Mammary epithelial cell (primary cell): ENCODE measurements at regions of chr22 and their contacts with region 1.

Region 1: DNA sequence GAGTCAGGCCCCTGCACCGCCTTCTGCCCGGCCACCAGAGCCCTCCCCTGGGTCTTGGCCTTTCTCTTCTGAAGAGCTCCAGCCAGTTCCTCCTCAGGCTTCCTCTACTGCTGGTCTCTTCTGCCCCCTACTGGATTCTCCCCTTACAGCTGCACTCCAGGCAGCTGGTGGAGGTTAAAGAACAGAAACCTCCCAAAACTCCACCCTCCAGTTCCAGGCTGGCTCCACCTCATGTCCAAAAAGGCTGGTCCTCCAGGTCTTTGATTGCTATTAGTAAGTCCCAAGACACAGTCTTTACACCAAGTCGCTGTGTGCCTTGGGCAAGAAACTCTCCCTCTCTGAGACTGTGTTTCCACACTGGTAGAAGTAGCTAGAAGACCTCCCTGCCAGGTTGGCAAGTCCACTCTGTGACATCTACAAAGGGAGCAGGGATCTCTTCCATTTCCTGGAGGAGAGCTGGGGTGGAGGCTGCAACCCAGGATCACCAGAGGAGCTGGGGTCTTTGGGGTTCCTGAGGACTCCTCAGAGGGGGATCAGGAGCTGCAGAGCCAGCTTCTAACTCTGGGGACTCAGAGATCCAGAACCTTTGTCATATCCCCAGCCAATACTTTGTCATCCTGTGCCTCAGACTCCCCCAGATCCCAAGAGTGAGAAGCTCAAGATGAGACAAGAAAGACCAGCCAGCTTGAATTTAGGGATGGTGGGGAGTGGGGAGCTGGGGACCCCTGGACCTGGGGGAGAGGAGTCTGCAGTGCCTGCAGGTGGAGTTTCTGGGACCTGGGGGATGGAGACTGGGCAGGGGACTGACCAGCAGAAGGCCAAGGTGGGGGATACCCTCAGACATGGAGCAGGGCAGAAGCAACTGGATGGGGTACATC is 3.4 kb upstream of the IGLL5 start:
- DNase-seq: peak; percentile 37
- H3K4me3 ChIP-seq: no peak overlapping the region
- H3K27ac ChIP-seq: no peak overlapping the region
- H3K4me1 ChIP-seq: no peaks in the 10 kb centered on the region
- H3K27me3 ChIP-seq: no peaks in the 10 kb centered on the region
- CTCF ChIP-seq: peak; percentile 45 to 74

Region 2: GRCh38 chr22:22463855-22464540 is 420.3 kb before region 1 on chr22:
- CTCF ChIA-PET with region 1: no interaction called
- dilution Hi-C with region 1: no loop called
- in situ Hi-C with region 1: no loop called
- intact Hi-C with region 1: loop called (anchors 10 kb)
- DNase-seq: peak; percentile 25
- H3K4me3 ChIP-seq: no peak overlapping the region
- H3K27ac ChIP-seq: no peak overlapping the region
- H3K4me1 ChIP-seq: no peaks in the 10 kb centered on the region
- H3K27me3 ChIP-seq: no peaks in the 10 kb centered on the region
- CTCF ChIP-seq: peak; percentile 45 to 62

Region 3: GRCh38 chr22:22593964-22594656 is 290.1 kb before region 1 on chr22:
- CTCF ChIA-PET with region 1: no interaction called
- dilution Hi-C with region 1: no loop called
- in situ Hi-C with region 1: loop called in 1 of 2 experiments (anchors 25 kb)
- intact Hi-C with region 1: no loop called
- DNase-seq: peak; percentile 8
- H3K4me3 ChIP-seq: no peak overlapping the region
- H3K27ac ChIP-seq: no peak overlapping the region
- H3K4me1 ChIP-seq: no peaks in the 10 kb centered on the region
- H3K27me3 ChIP-seq: no peaks in the 10 kb centered on the region
- CTCF ChIP-seq: peak; percentile 54 to 61

Region 4: GRCh38 chr22:22770280-22770871 is 113.9 kb before region 1 on chr22:
- CTCF ChIA-PET with region 1: interaction called, 5 read pairs
- dilution Hi-C with region 1: no loop called
- in situ Hi-C with region 1: no loop called
- intact Hi-C with region 1: loop called (anchors 5 kb)
- DNase-seq: peak; percentile 10
- H3K4me3 ChIP-seq: no peak overlapping the region
- H3K27ac ChIP-seq: no peak overlapping the region
- H3K4me1 ChIP-seq: no peaks in the 10 kb centered on the region
- H3K27me3 ChIP-seq: no peaks in the 10 kb centered on the region
- CTCF ChIP-seq: peak; percentile 68 to 85

Region 5: DNA sequence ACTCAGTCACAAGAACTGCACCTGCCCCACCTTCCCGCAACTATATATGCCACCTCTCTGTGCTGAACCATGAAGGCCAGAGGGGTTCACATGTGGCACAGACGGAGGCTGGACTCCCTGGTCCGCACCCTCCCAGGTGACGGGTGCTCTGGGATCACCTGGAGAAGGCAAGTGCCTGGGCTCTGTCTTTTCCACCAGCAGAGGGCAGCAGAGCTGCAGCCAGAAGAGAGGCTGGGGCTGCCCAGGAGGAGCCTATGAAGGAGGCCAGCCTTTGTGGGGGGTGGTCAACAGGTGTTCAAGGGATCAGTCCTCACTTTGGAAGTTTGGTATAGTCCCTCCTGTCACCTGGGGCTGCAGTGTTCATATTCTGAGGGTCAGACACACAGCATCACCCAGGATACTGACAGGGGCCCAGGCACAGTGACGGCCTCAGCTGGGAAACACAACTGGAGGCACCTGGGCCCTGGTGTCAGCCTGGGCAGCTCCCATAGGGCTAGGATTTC is 35.8 kb before region 1 on chr22:
- CTCF ChIA-PET with region 1: no interaction called
- dilution Hi-C with region 1: no loop called
- in situ Hi-C with region 1: no loop called
- intact Hi-C with region 1: loop called (anchors 5 kb)
- DNase-seq: peak; percentile 28
- H3K4me3 ChIP-seq: no peak overlapping the region
- H3K27ac ChIP-seq: no peak overlapping the region
- H3K4me1 ChIP-seq: no peaks in the 10 kb centered on the region
- H3K27me3 ChIP-seq: no peaks in the 10 kb centered on the region
- CTCF ChIP-seq: peak; percentile 97 to 98